GM10248 (cell line): ENCODE measurements at regions of chr22 and their contacts with region 1.

Region 1: GRCh38 chr22:17797721-17798559 is 23.7 kb upstream of the BID start:
- DNase-seq: peak; percentile 78
- CTCF ChIP-seq: no peak

Region 2: DNA sequence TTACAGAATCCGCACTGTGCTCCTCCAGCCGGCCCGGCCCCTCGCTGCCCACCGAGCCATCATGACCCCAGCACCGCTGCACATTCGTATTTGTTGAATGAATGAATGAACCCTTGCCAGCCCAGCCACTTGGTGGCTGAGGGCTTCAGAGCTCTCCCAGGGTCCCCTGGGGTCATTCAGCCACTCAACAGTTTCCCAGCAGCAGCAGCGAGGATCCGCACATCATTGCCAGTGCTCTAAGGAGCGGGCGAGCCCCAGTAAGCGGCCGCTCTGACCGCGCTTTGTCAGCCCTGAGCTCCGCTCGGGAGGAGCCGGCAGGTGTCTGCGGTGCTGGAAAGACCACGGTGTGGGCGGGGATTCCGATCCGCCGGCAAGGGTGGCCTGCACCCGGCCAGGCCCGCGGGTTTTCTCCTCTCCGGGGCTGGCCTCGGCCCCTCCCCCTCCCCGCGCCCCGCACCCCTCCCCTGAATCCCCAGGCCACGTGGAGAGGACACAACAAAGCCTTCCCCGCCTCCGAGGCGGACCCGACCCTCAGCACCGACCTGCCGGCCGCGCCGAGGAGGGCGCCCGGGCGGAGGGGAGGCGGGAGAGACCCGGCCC is 24.2 kb before region 1 on chr22:
- CTCF ChIA-PET with region 1: interaction called, 13 read pairs
- POLR2A ChIA-PET with region 1: interaction called, 16 read pairs
- DNase-seq: peak; percentile 68
- CTCF ChIP-seq: no peak

Region 3: DNA sequence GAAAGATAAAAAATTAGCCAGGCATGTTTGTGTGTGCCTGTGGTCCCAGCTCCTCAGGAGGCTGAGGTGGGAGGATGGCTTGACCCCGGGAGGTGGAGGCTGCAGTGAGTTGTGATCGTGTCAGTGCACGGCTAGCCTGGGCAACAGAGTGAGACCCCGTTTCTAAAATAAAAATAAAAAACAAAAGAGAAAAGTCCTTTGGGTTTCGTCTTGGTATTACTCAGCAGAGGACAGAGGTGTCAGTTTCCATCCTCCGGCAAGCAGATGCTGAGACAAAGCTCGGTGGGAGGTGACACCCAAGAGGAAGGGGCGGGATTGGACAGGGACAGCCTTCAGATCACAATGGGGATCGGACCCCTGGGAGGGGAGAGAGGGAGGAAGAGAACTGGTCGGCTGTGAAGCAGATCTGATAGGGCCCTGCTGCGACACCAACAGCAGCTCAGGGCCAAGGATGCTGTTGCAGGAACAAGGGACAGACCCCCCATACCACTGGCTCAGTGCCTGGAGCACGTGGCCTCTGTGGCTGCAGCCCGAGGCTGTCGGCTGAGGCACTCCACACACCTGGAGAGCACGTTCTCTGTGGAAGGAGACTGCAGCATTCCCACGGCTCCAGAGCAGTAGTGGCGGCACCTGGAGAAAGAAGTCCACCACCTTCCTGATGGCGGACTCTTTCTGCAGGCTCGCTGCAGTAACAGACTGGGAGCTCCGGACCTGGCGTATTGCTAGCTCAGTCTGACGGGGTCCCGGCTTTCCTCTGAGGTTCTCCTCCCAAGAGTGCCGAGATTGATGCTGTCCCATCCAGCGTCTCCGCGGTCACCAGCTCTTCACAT is 18.4 kb before region 1 on chr22:
- CTCF ChIA-PET with region 1: interaction called, 68 read pairs
- POLR2A ChIA-PET with region 1: interaction called, 16 read pairs
- DNase-seq: peak; percentile 84
- CTCF ChIP-seq: no peak